Endothelial cell of umbilical vein (primary cell): ENCODE measurements at regions of chr9 and their contacts with region 1.

Region 1: GRCh38 chr9:127943731-127944144 is 6.1 kb upstream of the DPM2 start:
- DNase-seq: peak; percentile 71
- H3K4me3 ChIP-seq: no peak overlapping the region
- H3K27ac ChIP-seq: no peak overlapping the region
- H3K4me1 ChIP-seq: no peaks in the 10 kb centered on the region
- H3K27me3 ChIP-seq: no peaks in the 10 kb centered on the region
- CTCF ChIP-seq: peak; percentile 90 to 99
- POLR2A ChIP-seq: no peak

Region 2: DNA sequence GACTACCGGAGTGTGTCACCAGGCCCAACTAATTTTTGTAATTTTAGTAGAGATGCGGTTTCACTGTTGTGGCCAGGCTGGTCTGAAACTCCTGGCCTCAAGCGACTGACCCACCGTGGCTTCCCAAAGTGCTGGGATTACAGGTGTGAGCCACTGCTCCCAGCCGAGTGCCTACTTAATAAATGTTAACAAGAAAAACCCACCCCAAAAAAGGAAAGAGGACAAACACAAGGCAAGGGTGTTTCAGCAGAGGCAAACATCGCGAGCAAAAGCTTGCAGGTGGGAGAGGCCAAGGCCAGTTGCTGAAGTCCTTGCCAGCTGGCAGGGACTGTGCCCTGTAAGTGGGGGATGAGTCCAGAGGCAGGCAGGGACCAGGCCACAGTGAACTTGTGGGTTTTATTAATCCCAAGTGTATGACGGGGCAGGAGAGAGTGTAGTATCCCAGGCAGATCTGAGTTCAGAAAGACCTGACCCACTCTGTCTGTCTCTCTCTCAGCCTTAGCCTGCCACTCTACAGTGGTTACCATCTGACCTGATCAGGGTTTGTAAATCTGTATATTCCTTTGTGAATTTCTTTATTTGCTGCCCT is 147.4 kb before region 1 on chr9:
- CTCF ChIA-PET with region 1: no interaction called
- POLR2A ChIA-PET with region 1: no interaction called
- dilution Hi-C with region 1: no loop called
- intact Hi-C with region 1: no loop called
- DNase-seq: no peak
- H3K4me3 ChIP-seq: no peak overlapping the region
- H3K27ac ChIP-seq: no peak overlapping the region
- H3K4me1 ChIP-seq: peaks cover 14% of the 10 kb centered on the region
- H3K27me3 ChIP-seq: no peaks in the 10 kb centered on the region
- CTCF ChIP-seq: no peak
- POLR2A ChIP-seq: peak; percentile 21

Region 3: GRCh38 chr9:127838375-127839078 is 105.2 kb before region 1 on chr9:
- CTCF ChIA-PET with region 1: no interaction called
- POLR2A ChIA-PET with region 1: no interaction called
- dilution Hi-C with region 1: no loop called
- intact Hi-C with region 1: no loop called
- DNase-seq: peak; percentile 97
- H3K4me3 ChIP-seq: no peak overlapping the region
- H3K27ac ChIP-seq: peak overlapping the region; percentile 99
- H3K4me1 ChIP-seq: peaks cover 74% of the 10 kb centered on the region
- H3K27me3 ChIP-seq: no peaks in the 10 kb centered on the region
- CTCF ChIP-seq: no peak
- POLR2A ChIP-seq: peak; percentile 76

Region 4: GRCh38 chr9:127963359-127964064 is 19.8 kb after region 1 on chr9:
- CTCF ChIA-PET with region 1: interaction called, 10 read pairs
- POLR2A ChIA-PET with region 1: no interaction called
- dilution Hi-C with region 1: no loop called
- intact Hi-C with region 1: no loop called
- DNase-seq: no peak
- H3K4me3 ChIP-seq: no peak overlapping the region
- H3K27ac ChIP-seq: no peak overlapping the region
- H3K4me1 ChIP-seq: peaks cover 12% of the 10 kb centered on the region
- H3K27me3 ChIP-seq: no peaks in the 10 kb centered on the region
- CTCF ChIP-seq: no peak
- POLR2A ChIP-seq: no peak

Region 5: GRCh38 chr9:128007566-128008138 is 63.9 kb after region 1 on chr9:
- CTCF ChIA-PET with region 1: interaction called, 16 read pairs
- POLR2A ChIA-PET with region 1: no interaction called
- dilution Hi-C with region 1: no loop called
- intact Hi-C with region 1: loop called (anchors 2 kb)
- DNase-seq: peak; percentile 86
- H3K4me3 ChIP-seq: no peak overlapping the region
- H3K27ac ChIP-seq: peak overlapping the region; percentile 54
- H3K4me1 ChIP-seq: peaks cover 37% of the 10 kb centered on the region
- H3K27me3 ChIP-seq: no peaks in the 10 kb centered on the region
- CTCF ChIP-seq: no peak
- POLR2A ChIP-seq: no peak

Region 6: DNA sequence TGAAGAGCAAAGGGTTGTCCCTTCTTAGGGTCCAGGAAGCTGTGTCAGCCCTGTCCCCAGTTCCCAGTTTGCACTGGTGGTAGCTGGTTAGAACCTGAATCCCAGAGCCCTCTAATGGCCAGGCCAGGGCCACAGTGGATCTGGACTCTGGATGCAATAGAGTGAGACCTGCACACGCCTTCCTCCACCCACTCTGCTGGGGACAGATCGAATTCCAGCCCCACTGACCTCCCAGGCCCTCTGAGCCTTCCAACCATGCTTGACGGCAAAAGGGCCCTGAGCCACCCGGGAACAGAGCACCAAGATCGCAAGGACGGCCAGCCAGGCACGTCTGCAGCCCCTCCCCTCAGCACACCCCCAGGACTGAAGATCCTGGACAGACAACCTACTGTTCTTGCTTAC is 99.7 kb after region 1 on chr9:
- CTCF ChIA-PET with region 1: interaction called, 203 read pairs
- POLR2A ChIA-PET with region 1: no interaction called
- dilution Hi-C with region 1: no loop called
- intact Hi-C with region 1: no loop called
- DNase-seq: no peak
- H3K4me3 ChIP-seq: no peak overlapping the region
- H3K27ac ChIP-seq: no peak overlapping the region
- H3K4me1 ChIP-seq: no peaks in the 10 kb centered on the region
- H3K27me3 ChIP-seq: peaks cover 2 to 3% of the 10 kb centered on the region in 2 experiments
- CTCF ChIP-seq: no peak
- POLR2A ChIP-seq: no peak

Region 7: DNA sequence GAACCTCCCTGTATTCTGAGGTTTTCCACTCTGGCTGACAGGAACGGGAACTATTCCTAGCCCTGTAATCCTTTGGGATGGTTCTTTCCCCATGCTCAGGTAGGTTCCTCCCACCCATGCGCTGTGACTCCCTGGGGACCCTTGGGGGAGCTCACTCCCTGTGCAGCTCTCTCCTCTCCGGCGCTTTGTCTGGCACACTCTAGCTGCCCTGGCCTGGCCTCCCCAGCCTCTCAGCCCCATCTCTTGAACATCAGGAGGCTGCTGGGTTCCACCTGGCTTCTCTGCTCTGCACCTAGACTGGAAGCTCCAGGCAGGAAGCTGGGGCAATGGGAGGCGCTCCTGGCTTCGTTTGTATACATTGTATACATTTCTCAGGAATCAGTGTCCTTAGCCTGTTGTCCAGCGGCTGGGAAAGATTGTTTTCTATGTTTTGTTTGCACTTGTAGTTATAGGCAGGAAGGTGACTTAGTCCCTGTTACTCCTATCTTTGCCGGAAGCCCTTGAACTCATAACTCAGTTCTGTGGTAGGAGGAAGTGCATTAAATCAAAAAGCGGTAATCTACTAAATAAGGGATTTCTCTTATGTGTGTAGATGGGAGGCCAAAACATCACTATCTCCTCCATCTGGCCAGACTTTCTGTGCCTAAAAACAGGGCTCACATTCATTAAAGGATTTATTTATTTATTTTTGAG is 144.7 kb after region 1 on chr9:
- CTCF ChIA-PET with region 1: interaction called, 11 read pairs
- POLR2A ChIA-PET with region 1: no interaction called
- dilution Hi-C with region 1: no loop called
- intact Hi-C with region 1: loop called (anchors 1 kb)
- DNase-seq: no peak
- H3K4me3 ChIP-seq: no peak overlapping the region
- H3K27ac ChIP-seq: no peak overlapping the region
- H3K4me1 ChIP-seq: peaks cover 15% of the 10 kb centered on the region
- H3K27me3 ChIP-seq: no peaks in the 10 kb centered on the region
- CTCF ChIP-seq: no peak
- POLR2A ChIP-seq: no peak